Activated CD4-positive, alpha-beta memory T cell treated with anti-CD3 and anti-CD28 coated beads for 36 hours (primary cell): ENCODE measurements at regions of chr6 and their contacts with region 1.

Region 1: GRCh38 chr6:30730601-30731435 is 10.7 kb downstream of the TUBB start:
- DNase-seq: peak; percentile 93
- H3K4me3 Mint-ChIP-seq: peak overlapping the region; percentile 10
- H3K27ac Mint-ChIP-seq: peak overlapping the region; percentile 56
- H3K4me1 Mint-ChIP-seq: peaks cover 39% of the 10 kb centered on the region
- H3K27me3 Mint-ChIP-seq: no peaks in the 10 kb centered on the region

Region 2: DNA sequence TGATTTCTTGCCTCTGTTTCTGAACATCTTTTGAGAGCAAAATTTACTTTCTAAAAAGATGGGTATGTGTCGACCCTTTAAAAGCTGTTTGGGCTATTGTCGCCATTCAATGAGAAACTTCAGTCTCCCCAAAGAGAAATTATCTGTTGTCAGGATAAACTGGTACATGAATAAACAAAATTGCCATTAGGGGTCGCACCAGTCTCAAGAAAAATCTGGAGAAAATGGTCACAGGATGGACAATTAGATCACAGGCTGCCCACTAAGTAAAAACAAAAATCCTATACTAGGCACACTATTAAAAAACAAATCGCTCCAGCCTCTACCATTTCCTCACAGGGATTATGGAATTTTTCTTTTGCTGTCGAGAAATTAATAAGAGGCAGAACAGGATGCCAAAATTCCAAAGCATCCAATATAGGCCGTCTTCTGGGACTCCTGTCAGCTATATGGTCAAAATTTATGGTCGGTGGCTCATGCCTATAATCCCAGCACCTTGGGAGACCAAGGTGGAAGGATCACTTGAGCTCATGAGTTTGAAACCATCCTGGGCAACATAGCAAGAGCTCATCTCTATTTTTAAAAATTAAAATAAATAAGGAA is 247.0 kb before region 1 on chr6:
- CTCF ChIA-PET with region 1: interaction called, 14 read pairs
- POLR2A ChIA-PET with region 1: interaction called, 3 read pairs
- intact Hi-C with region 1: no loop called
- DNase-seq: no peak
- H3K4me3 Mint-ChIP-seq: no peak overlapping the region
- H3K27ac Mint-ChIP-seq: no peak overlapping the region
- H3K4me1 Mint-ChIP-seq: peaks cover 34% of the 10 kb centered on the region
- H3K27me3 Mint-ChIP-seq: peaks cover 29% of the 10 kb centered on the region

Region 3: DNA sequence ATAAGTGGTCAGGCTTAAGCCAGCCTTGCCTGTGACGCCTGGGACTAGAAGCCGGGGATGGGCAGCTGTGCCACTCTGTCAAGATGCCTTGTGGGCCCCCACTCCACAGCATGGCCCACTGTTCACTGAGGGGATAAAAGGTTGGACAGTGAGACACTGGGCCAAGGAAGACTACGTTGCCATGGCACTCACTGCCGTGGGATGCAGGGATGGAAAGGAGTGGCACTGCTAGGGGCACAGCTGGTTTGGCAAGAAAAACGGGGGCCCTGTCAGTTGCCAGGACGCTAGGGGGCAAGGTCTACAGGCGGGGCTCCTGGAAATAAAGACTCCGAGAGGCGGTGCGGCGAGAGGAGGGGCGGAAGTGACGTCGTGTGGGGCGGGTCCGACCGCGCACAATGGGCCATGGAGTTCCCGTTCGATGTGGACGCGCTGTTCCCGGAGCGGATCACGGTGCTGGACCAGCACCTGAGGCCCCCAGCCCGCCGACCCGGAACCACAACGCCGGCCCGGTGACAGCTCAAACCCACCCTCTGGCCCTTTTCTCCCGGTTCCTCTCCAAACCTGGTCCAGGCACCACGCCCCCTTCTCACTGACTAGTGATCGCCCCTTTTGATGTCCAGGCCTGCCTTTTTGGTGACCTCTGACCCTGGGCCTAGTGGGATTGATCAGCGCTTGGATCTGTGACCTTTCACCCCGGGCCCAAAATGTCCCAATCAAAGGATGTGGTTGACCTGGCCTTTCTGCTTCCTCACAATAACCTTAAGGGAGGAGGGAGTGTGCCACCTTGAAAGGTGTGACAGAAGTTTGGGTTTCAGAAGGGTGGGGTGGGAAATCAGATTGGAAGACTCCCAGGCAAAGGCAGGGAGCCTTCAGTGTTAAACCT is 104.1 kb before region 1 on chr6 and contains the start of gene ATAT1:
- CTCF ChIA-PET with region 1: interaction called, 10 read pairs
- POLR2A ChIA-PET with region 1: interaction called, 4 read pairs
- intact Hi-C with region 1: no loop called
- DNase-seq: peak; percentile 92
- H3K4me3 Mint-ChIP-seq: peak within 1 kb of the TSS; percentile 88
- H3K27ac Mint-ChIP-seq: peak within 1 kb of the TSS; percentile 90
- H3K4me1 Mint-ChIP-seq: peaks cover 24% of the 10 kb centered on the region
- H3K27me3 Mint-ChIP-seq: no peaks in the 10 kb centered on the region
- total RNA-seq, gene ATAT1: 7.6 to 8.7 TPM

Region 4: GRCh38 chr6:30717042-30717844 is 13.6 kb before region 1 on chr6 and contains the start of gene MDC1:
- CTCF ChIA-PET with region 1: interaction called, 41 read pairs
- POLR2A ChIA-PET with region 1: interaction called, 14 read pairs
- intact Hi-C with region 1: no loop called
- DNase-seq: peak; percentile 100
- H3K4me3 Mint-ChIP-seq: peak within 1 kb of the TSS; percentile 92
- H3K27ac Mint-ChIP-seq: peak within 1 kb of the TSS; percentile 99
- H3K4me1 Mint-ChIP-seq: peaks cover 41% of the 10 kb centered on the region
- H3K27me3 Mint-ChIP-seq: no peaks in the 10 kb centered on the region
- total RNA-seq, gene MDC1: 79.5 to 88.7 TPM

Region 5: DNA sequence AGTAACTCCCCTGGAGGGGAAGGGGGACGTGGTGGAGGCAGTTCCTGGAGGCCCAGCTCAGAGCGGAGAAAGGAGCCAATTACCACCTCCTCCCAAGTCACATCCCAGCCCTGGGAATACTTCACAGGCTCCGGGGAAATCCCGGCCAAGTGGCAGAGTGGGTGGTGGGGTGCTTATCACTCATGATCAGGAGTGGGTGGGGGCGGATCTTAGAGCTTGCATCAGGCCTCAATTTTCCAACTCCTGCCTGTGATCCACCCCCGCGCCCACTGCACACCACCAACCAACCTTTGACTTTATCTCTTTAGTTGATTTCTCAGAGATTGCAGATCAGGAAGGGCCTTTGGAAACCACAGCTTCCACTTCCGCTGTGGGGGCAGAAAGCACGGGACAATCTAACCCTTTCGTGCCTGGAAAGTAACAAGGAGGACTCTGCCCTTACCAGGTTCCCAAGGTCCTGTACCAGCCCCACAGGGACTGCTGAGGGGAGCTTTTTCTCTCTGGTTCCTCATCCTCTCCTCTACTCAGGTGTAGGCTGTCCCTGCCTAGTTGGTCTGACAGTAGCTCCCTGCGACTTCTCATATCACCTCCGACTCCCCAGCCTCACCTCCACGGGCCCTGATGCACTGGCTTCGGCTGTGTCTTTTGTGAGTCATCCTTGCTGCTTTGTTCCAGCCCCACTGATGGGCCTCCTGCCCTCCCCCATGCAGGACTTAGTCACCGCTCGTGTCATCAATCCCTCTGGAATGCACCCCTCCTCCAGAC is 38.5 kb after region 1 on chr6:
- CTCF ChIA-PET with region 1: interaction called, 5 read pairs
- POLR2A ChIA-PET with region 1: interaction called, 32 read pairs
- intact Hi-C with region 1: no loop called
- DNase-seq: peak; percentile 89
- H3K4me3 Mint-ChIP-seq: peak overlapping the region; percentile 52
- H3K27ac Mint-ChIP-seq: peak overlapping the region; percentile 93
- H3K4me1 Mint-ChIP-seq: peaks cover 65% of the 10 kb centered on the region
- H3K27me3 Mint-ChIP-seq: no peaks in the 10 kb centered on the region

Region 6: GRCh38 chr6:30821862-30822782 is 91.3 kb after region 1 on chr6:
- CTCF ChIA-PET with region 1: interaction called, 37 read pairs
- POLR2A ChIA-PET with region 1: interaction called, 26 read pairs
- intact Hi-C with region 1: no loop called
- DNase-seq: no peak
- H3K4me3 Mint-ChIP-seq: no peak overlapping the region
- H3K27ac Mint-ChIP-seq: peak overlapping the region; percentile 78
- H3K4me1 Mint-ChIP-seq: peaks cover 76% of the 10 kb centered on the region
- H3K27me3 Mint-ChIP-seq: no peaks in the 10 kb centered on the region

Region 7: DNA sequence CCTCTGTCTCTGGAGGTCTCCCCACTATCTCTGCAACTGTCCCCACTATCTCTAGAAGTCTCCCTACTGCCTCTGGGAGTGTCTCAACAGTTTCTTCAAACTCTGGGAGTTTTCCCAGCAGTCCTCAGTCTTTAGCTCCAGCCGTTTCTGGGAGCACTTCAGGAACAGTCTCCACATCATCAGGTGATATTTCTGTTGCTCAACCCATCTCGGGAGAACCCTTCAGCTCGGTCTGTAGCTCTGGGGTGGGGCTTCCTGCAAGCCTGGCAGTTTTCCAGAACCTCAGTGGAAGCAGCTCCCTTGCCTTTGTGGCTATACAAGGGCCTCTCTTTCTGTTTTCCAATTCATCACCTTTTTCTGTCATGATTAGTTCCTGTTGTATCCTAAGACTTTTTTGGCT is 204.2 kb after region 1 on chr6:
- CTCF ChIA-PET with region 1: no interaction called
- POLR2A ChIA-PET with region 1: no interaction called
- intact Hi-C with region 1: no loop called
- DNase-seq: no peak
- H3K4me3 Mint-ChIP-seq: no peak overlapping the region
- H3K27ac Mint-ChIP-seq: no peak overlapping the region
- H3K4me1 Mint-ChIP-seq: no peaks in the 10 kb centered on the region
- H3K27me3 Mint-ChIP-seq: peaks cover 9% of the 10 kb centered on the region

Region 8: GRCh38 chr6:31087494-31088089 is 356.8 kb after region 1 on chr6:
- CTCF ChIA-PET with region 1: interaction called, 12 read pairs
- POLR2A ChIA-PET with region 1: no interaction called
- intact Hi-C with region 1: loop called (anchors 10 kb)
- DNase-seq: peak; percentile 92
- H3K4me3 Mint-ChIP-seq: peak overlapping the region; percentile 12
- H3K27ac Mint-ChIP-seq: peak overlapping the region; percentile 45
- H3K4me1 Mint-ChIP-seq: peaks cover 11% of the 10 kb centered on the region
- H3K27me3 Mint-ChIP-seq: no peaks in the 10 kb centered on the region